H1 (cell line): ENCODE measurements at regions of chr4 and their contacts with region 1.

Region 1: GRCh38 chr4:150131581-150132228 is 53.5 kb downstream of the DCLK2 start:
- DNase-seq: no peak
- H3K4me3 ChIP-seq: no peak overlapping the region
- H3K27ac ChIP-seq: no peak overlapping the region
- H3K4me1 ChIP-seq: no peaks in the 10 kb centered on the region
- H3K27me3 ChIP-seq: no peaks in the 10 kb centered on the region
- CTCF ChIP-seq: no peak
- EP300 ChIP-seq: no peak
- POLR2A ChIP-seq: no peak
- RAD21 ChIP-seq: no peak

Region 2: GRCh38 chr4:150145090-150145949 is 13.6 kb after region 1 on chr4:
- CTCF ChIA-PET with region 1: interaction called, 10 read pairs
- POLR2A ChIA-PET with region 1: no interaction called
- DNase-seq: no peak
- H3K4me3 ChIP-seq: no peak overlapping the region
- H3K27ac ChIP-seq: no peak overlapping the region
- H3K4me1 ChIP-seq: no peaks in the 10 kb centered on the region
- H3K27me3 ChIP-seq: no peaks in the 10 kb centered on the region
- CTCF ChIP-seq: peak in 2 of 3 experiments; percentile 9 to 43; a peak in 2 of 4 replicates
- EP300 ChIP-seq: no peak
- POLR2A ChIP-seq: no peak
- RAD21 ChIP-seq: peak in 1 of 2 experiments; percentile 16; a peak in 1 of 4 replicates

Region 3: DNA sequence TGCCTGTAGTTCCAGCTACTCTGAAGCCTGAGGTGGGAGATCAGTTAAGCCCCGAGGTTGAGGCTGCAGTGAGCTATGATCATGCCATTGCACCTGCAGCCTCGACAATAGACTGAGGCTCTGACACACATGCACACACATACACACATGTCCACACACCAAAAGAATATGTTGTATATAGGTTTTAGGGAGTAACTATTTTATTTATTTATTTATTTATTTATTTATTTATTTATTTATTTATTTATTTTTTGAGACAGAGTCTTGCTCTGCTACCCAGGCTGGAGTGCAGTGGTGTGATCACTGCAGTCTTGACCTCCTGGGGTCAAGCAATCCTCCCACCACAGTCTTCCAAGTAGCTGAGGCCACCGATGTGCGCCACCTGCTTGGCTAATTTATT is 24.8 kb after region 1 on chr4:
- CTCF ChIA-PET with region 1: no interaction called
- POLR2A ChIA-PET with region 1: no interaction called
- DNase-seq: no peak
- H3K4me3 ChIP-seq: no peak overlapping the region
- H3K27ac ChIP-seq: no peak overlapping the region
- H3K4me1 ChIP-seq: no peaks in the 10 kb centered on the region
- H3K27me3 ChIP-seq: no peaks in the 10 kb centered on the region
- CTCF ChIP-seq: no peak
- EP300 ChIP-seq: no peak
- POLR2A ChIP-seq: no peak
- RAD21 ChIP-seq: no peak